Ovary (tissue), 10 donors: ENCODE measurements at regions of chr9 and their contacts with region 1.

Region 1: GRCh38 chr9:131762356-131762932 is 22.6 kb upstream of the RAPGEF1 start:
- DNase-seq: peak; percentile 55 to 82 (median 78)
- H3K4me3 ChIP-seq: no peak overlapping the region
- H3K27ac ChIP-seq: no peak overlapping the region
- H3K4me1 ChIP-seq: peaks cover 2% of the 10 kb centered on the region
- H3K27me3 ChIP-seq: no peaks in the 10 kb centered on the region
- CTCF ChIP-seq: peak; percentile 74 to 85 (median 81)
- EP300 ChIP-seq: no peak
- POLR2A ChIP-seq: no peak

Region 2: DNA sequence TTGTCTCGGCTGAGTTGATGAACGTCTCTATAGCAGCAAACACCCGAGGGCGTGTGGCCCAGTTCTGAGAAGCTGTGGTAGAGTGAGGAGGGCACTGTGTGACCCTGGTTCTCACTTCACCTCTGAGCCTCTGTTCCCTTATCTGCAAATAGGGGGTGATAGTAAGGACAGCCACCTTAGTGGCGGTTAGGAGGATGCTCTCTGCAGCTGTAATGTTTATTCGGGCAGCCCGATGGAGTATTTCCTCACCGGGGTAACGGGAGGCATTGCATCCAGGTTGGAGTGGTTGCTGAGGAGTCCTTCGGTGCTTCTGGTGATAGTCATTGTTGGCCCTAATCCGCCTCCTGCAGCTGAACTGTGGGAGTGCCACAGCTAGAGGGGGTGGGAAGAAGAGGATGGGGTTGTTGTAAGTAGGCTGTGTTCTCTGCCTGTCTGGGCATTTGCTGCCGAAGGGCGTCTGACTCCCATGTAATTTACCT is 354.7 kb before region 1 on chr9:
- intact Hi-C with region 1: no loop called
- DNase-seq: peak in 3 of 5 donors; percentile 37 to 64 (median 58)
- H3K4me3 ChIP-seq: no peak overlapping the region
- H3K27ac ChIP-seq: peak overlapping the region in 1 of 2 donors; percentile 36
- H3K4me1 ChIP-seq: peaks cover 51% of the 10 kb centered on the region
- H3K27me3 ChIP-seq: no peaks in the 10 kb centered on the region
- CTCF ChIP-seq: peak in 1 of 3 donors; percentile 24
- EP300 ChIP-seq: no peak
- POLR2A ChIP-seq: no peak

Region 3: DNA sequence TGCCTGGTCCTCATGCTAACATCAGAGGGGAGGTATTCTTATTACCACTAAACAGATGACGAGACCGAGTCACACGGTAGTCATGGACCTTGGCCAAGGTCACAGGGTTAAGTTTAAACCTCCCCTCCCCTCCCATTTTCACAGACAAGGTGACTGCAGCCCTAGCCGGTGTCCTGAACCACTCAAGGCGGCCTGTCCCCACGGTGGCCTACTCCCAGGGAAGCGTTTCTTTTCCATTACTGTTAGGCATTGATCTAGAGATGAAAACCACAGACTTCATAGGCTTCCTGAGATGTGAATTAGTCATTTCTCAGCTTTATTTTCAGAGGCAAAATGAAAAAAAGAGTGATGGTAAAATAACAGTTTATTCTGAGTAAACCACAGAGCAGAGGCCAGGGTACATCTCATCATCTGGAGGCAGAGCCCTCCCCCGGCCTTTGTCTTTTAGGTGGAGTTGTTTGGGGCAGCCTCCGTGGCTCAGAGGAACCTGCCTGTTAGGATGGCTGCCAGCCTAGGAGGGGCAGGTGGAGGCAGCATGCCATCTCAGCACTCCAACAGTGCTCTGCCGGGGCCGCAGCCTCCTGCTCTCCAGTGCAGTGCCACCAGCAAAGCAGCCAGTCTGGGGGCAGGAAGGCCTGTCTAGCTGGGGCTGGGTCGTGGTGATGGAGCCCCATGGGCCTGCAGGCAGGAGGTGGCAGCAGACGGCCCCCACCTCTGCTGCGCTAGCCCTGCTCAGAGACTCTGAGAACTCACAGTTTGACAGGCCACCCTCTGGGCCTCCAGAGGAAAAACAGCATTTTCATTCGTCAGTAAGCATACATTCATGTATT is 93.8 kb before region 1 on chr9:
- intact Hi-C with region 1: no loop called
- DNase-seq: no peak
- H3K4me3 ChIP-seq: no peak overlapping the region
- H3K27ac ChIP-seq: no peak overlapping the region
- H3K4me1 ChIP-seq: peaks cover 8% of the 10 kb centered on the region
- H3K27me3 ChIP-seq: no peaks in the 10 kb centered on the region
- CTCF ChIP-seq: no peak
- EP300 ChIP-seq: no peak
- POLR2A ChIP-seq: no peak

Region 4: DNA sequence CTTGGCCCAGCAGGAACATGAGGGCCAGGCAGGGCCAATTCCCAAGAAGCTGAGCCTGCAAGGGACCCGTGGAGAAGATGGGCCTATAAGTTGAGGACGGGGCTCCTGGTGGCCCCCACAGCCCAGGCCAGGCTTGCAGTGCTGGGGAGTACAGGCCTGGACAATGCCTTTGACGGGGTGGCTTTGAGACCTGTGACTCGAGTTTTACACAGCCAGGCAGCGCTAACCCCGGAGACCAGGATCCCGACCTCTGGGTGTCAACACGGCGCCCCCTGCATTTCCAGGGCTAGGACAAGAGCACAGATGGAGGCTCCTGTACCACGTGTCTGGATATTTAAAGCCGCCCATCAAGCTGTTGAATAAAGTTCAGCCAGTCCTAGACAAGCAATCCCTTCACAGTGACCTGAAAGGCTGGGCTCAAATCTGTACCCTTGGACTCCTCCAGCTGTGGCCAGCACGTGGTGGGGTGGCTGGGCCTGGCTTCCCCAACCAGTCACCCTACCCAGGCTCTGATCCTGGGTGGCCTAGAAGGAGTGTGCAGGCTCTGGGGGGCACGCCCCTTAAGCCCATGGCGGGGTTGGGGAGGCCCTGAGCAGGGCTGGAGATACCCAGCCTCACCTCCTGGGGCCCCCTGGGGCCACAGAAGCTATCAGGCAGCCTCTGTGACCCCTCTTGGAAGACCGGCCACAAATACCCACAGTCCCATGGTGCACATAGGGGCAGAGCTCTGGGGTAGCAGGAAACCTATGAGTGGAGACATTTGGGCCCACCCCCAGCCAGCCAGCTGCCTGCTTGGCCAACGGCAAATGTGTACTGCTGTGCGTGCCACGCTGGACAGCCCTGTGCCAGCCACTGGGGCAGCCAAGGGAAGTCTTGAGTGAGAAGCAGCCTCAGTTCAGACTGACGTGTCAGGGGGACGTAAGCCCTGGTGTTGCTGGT is 488.1 kb after region 1 on chr9:
- intact Hi-C with region 1: loop called in 1 of 4 experiments (anchors 5 kb)
- DNase-seq: no peak
- H3K4me3 ChIP-seq: no peak overlapping the region
- H3K27ac ChIP-seq: no peak overlapping the region
- H3K4me1 ChIP-seq: peaks cover 3% of the 10 kb centered on the region
- H3K27me3 ChIP-seq: no peaks in the 10 kb centered on the region
- CTCF ChIP-seq: no peak
- EP300 ChIP-seq: no peak
- POLR2A ChIP-seq: no peak

Region 5: DNA sequence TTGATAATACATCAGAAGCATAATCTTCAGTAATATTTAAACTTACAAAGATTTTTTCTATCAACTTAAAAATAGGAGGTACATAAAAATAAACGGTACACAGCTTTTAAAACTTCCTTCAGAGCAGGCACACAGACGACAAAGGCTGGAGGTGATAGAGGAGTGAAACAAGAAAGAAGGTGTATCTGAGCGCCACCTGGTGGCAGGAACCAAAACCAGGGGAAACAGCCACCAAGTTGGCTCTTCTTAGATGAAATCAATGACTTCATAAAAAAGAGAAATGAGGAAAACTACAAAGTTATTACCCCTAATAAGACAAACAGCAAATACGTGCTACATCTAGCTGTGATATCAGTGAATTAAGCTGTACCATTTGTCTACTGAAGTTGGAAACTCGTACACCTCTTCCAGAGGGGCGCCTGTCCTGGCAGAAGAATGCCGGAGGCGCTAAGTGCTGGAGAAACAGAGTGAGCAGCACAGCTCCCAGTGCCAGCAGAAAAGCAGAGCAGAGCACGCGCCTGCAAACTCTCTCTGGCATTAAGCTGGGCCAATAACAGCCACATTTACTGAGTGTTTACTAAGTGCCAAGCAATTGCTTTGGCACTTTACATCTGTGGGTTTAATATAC is 506.4 kb after region 1 on chr9:
- intact Hi-C with region 1: loop called in 3 of 4 experiments (anchors 2 kb)
- DNase-seq: peak; percentile 48 to 81 (median 70)
- H3K4me3 ChIP-seq: no peak overlapping the region
- H3K27ac ChIP-seq: no peak overlapping the region
- H3K4me1 ChIP-seq: no peaks in the 10 kb centered on the region
- H3K27me3 ChIP-seq: no peaks in the 10 kb centered on the region
- CTCF ChIP-seq: peak; percentile 63 to 75 (median 64)
- EP300 ChIP-seq: no peak
- POLR2A ChIP-seq: no peak